Calu3 (cell line): ENCODE measurements at regions of chr1 and their contacts with region 1.

Region 1: GRCh38 chr1:208184088-208184911 is 59.9 kb downstream of the PLXNA2 start:
- DNase-seq: peak; percentile 57
- H3K4me3 Mint-ChIP-seq: no peak overlapping the region
- H3K27ac Mint-ChIP-seq: no peak overlapping the region
- H3K4me1 Mint-ChIP-seq: peaks cover 34% of the 10 kb centered on the region
- H3K27me3 Mint-ChIP-seq: no peaks in the 10 kb centered on the region
- CTCF ChIP-seq: no peak

Region 2: DNA sequence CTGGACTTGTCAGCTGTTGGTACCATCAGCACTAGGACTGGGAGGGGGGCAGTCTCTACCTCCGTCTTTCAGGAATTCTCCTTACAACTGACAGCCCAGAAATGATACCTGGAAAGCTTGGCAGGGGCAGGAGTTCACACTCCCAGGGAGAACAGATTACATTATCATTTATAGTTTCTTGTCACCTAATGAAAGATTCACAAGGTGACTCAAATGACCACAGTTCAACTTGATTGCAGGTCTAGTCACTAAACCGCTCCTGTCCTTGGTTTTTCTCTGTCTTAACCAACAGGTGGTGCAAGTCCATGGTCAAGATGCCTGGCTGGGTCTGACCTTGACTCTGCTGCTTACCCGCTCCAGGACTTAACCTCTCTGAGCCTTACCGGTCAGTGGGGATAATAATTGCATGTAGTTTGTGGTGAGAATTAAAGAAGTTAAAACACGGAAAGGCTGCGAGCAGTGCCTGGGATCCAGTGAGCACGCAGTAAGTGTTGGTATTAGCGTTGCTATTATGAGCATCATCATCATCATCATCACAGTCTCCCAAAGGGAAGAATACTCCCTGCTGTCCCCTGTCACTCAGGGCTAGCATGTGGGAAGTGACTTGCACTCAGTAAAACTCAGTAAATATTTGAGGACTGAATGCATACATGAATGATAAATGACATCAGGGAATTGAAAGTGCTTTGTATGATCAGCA is 148.0 kb before region 1 on chr1:
- CTCF ChIA-PET with region 1: no interaction called
- intact Hi-C with region 1: no loop called
- DNase-seq: peak; percentile 25
- H3K4me3 Mint-ChIP-seq: no peak overlapping the region
- H3K27ac Mint-ChIP-seq: no peak overlapping the region
- H3K4me1 Mint-ChIP-seq: no peaks in the 10 kb centered on the region
- H3K27me3 Mint-ChIP-seq: no peaks in the 10 kb centered on the region
- CTCF ChIP-seq: peak; percentile 46

Region 3: DNA sequence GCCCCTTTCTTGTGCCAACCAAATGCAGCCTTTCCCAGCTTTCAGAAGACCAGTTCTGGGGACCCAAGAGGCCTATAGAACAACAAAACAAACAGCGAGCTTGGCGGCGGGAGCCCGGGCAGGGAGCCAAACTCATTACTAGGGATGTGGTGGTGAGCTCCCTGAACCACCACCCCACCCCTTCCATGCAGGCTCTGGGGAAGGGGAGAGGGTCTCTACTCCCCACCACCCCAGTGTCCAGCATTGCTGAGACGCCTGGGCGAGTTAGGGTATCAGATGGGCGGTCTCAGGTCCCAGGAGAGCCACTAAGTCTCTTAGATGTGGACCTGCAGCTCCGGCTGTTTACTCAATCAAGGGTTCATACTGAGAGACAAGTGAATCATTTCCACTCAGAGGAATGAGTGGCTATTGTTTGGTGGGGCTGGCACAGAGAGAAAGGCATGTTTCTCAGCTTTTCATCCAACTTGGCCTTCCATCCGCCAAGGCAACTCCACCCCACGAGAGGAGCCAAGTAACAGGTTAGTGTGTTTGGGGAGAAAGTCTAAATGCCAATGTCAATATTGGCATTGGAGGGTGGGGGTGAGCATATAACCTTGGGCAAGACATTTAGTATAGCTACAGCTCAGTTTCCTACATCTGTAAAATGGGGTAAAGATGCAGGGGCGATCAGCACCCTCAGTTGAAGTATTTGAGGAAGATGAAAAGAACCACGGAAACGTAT is 19.0 kb after region 1 on chr1:
- CTCF ChIA-PET with region 1: interaction called, 4 read pairs
- intact Hi-C with region 1: loop called (anchors 2 kb)
- DNase-seq: peak; percentile 77
- H3K4me3 Mint-ChIP-seq: peak overlapping the region; percentile 42
- H3K27ac Mint-ChIP-seq: peak overlapping the region; percentile 62
- H3K4me1 Mint-ChIP-seq: peaks cover 27% of the 10 kb centered on the region
- H3K27me3 Mint-ChIP-seq: no peaks in the 10 kb centered on the region
- CTCF ChIP-seq: no peak

Region 4: GRCh38 chr1:209095627-209096595 is 911.6 kb after region 1 on chr1:
- CTCF ChIA-PET with region 1: no interaction called
- intact Hi-C with region 1: no loop called
- DNase-seq: peak; percentile 52
- H3K4me3 Mint-ChIP-seq: no peak overlapping the region
- H3K27ac Mint-ChIP-seq: no peak overlapping the region
- H3K4me1 Mint-ChIP-seq: peaks cover 14% of the 10 kb centered on the region
- H3K27me3 Mint-ChIP-seq: peaks cover 13% of the 10 kb centered on the region
- CTCF ChIP-seq: no peak